PC-9 (cell line): ENCODE measurements at regions of chr19 and their contacts with region 1.

Region 1: GRCh38 chr19:49954079-49954829 is 6.7 kb downstream of the SIGLEC11 start:
- DNase-seq: peak; percentile 31 to 81
- H3K4me3 ChIP-seq: peak overlapping the region; percentile 36; the same call in 1 of the 2 replicates
- H3K27ac ChIP-seq: peak overlapping the region; percentile 61
- H3K4me1 ChIP-seq: peaks cover 36% of the 10 kb centered on the region
- H3K27me3 ChIP-seq: peaks cover 7% of the 10 kb centered on the region
- CTCF ChIP-seq: no peak

Region 2: DNA sequence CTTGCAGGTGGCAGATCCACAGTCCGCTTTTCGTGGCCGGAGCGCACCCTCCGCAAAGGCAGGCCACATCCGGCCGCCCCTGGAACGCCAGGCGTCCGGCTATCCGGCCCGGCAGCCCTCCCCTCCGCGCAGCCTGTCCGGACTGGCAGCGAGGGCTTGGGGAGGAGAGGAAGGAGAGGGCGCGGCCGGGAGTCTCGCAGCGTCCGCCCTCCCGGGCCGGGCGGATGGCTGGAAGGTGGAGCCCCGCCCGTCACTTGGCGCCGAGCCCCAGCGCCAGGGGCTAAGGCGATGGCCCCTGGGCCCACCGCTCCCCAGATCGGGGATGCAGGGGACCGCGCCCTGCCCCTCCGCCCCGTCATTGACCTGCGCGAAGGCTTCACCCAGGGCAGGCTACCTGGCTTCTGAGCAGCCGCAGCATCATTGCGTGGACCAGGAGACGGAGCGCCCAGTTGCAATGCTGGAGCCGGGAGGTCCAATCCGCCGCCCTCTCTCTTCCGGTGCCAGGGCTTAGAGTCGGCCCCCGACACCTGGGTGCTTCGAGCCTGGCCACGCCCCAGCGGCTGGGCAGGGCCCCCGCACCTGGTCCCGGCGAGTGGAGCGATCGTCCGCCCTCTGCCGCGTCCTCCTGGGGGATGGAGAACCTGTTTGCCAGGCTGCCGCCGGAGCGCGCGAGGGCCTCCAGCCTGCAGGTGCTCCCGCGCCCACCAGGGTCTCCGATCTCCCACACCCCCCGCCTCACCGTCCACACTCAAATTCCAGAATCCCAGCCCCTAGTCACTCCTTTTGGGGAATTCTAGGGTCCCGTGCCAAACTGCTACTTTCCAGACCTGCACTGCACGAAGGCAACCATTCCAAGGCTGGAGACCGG is 1201.5 kb before region 1 on chr19 and contains the start of gene FUT1:
- CTCF ChIA-PET with region 1: interaction called, 15 read pairs
- POLR2A ChIA-PET with region 1: no interaction called
- intact Hi-C with region 1: no loop called
- DNase-seq: peak; percentile 95 to 98
- H3K4me3 ChIP-seq: peak within 1 kb of the TSS; percentile 78
- H3K27ac ChIP-seq: peak within 1 kb of the TSS; percentile 66
- H3K4me1 ChIP-seq: peaks cover 41% of the 10 kb centered on the region
- H3K27me3 ChIP-seq: no peaks in the 10 kb centered on the region
- CTCF ChIP-seq: peak; percentile 66
- total RNA-seq, gene FUT1: 7.9 and 9.6 TPM in 2 replicates

Region 3: GRCh38 chr19:49017666-49018351 is 936.4 kb before region 1 on chr19:
- CTCF ChIA-PET with region 1: no interaction called
- POLR2A ChIA-PET with region 1: no interaction called
- intact Hi-C with region 1: no loop called
- DNase-seq: peak in 1 of 2 experiments; percentile 55
- H3K4me3 ChIP-seq: peak overlapping the region; percentile 48; the same call in 1 of the 2 replicates
- H3K27ac ChIP-seq: no peak overlapping the region
- H3K4me1 ChIP-seq: peaks cover 9% of the 10 kb centered on the region; the same call in 1 of the 2 replicates
- H3K27me3 ChIP-seq: no peaks in the 10 kb centered on the region
- CTCF ChIP-seq: peak; percentile 57; the same call in 1 of the 2 replicates

Region 4: GRCh38 chr19:49929611-49930482 is 24.4 kb before region 1 on chr19:
- CTCF ChIA-PET with region 1: no interaction called
- POLR2A ChIA-PET with region 1: interaction called, 19 read pairs
- intact Hi-C with region 1: no loop called
- DNase-seq: peak; percentile 80 to 87
- H3K4me3 ChIP-seq: peak overlapping the region; percentile 83
- H3K27ac ChIP-seq: peak overlapping the region; percentile 79
- H3K4me1 ChIP-seq: peaks cover 18% of the 10 kb centered on the region
- H3K27me3 ChIP-seq: no peaks in the 10 kb centered on the region
- CTCF ChIP-seq: 0 out of 2 replicates have a peak, but pooled peaks have one; percentile 6

Region 5: GRCh38 chr19:49937750-49938381 is 16.4 kb before region 1 on chr19:
- CTCF ChIA-PET with region 1: interaction called, 3 read pairs
- POLR2A ChIA-PET with region 1: interaction called, 19 read pairs
- intact Hi-C with region 1: no loop called
- DNase-seq: peak; percentile 51 to 73
- H3K4me3 ChIP-seq: peak overlapping the region; percentile 9; the same call in 1 of the 2 replicates
- H3K27ac ChIP-seq: no peak overlapping the region
- H3K4me1 ChIP-seq: peaks cover 13% of the 10 kb centered on the region
- H3K27me3 ChIP-seq: no peaks in the 10 kb centered on the region
- CTCF ChIP-seq: peak; percentile 99

Region 6: GRCh38 chr19:50025024-50025789 is 71.0 kb after region 1 on chr19 and contains the start of gene VRK3:
- CTCF ChIA-PET with region 1: interaction called, 14 read pairs
- POLR2A ChIA-PET with region 1: no interaction called
- intact Hi-C with region 1: no loop called
- DNase-seq: peak; percentile 99
- H3K4me3 ChIP-seq: peak within 1 kb of the TSS; percentile 64
- H3K27ac ChIP-seq: peak within 1 kb of the TSS; percentile 27
- H3K4me1 ChIP-seq: peaks cover 27% of the 10 kb centered on the region
- H3K27me3 ChIP-seq: no peaks in the 10 kb centered on the region
- CTCF ChIP-seq: no peak; the same call in 1 of the 2 replicates
- total RNA-seq, gene VRK3: 53.3 and 62.5 TPM in 2 replicates